Colonic mucosa (tissue), 4 donors: ENCODE measurements at regions of chr4 and their contacts with region 1.

Region 1: DNA sequence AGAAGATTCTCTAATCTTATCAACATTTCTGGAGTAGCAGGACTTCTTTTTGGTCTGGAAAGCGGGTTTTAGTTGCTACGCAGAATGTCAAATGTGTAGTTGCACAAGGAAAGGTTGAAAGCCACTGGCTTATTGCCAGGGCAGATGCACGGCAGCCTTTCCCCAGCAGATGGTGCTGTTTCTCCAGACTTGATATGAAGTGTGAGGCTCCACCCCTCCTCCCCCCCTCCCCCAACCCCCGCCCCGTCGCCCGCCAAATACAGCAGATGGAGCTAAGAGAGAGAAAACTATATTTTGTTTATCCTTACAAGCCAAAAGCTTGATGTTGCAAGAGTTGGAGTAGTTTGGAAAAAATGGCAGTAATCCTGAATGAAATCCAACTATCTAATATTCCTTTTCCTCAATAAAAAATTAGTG is 32.0 kb downstream of the ENOPH1 start:
- DNase-seq: peak; percentile 89
- H3K4me3 ChIP-seq: no peak overlapping the region
- H3K27ac ChIP-seq: no peak overlapping the region
- H3K4me1 ChIP-seq: no peaks in the 10 kb centered on the region
- H3K27me3 ChIP-seq: no peaks in the 10 kb centered on the region
- CTCF ChIP-seq: peak; percentile 89

Region 2: DNA sequence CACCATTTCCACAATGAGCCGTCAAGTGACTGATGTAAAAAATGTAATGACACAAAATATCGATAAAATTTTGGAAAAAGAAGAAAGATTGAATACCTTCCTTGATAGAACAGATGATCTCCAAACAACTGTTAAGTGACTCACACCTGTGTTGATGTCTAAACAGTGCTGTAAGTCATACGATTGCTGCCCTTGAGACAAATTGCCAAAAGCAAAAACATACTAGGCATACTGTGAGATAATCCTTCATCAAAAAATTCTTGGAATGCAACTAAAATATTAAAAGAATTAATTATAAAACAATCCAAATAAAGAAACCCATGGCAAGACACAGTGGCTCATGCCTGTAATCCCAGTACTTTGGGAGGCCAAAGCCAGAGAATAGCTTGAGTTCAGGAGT is 142.1 kb before region 1 on chr4:
- intact Hi-C with region 1: no loop called
- DNase-seq: no peak
- H3K4me3 ChIP-seq: no peak overlapping the region
- H3K27ac ChIP-seq: no peak overlapping the region
- H3K4me1 ChIP-seq: no peaks in the 10 kb centered on the region
- H3K27me3 ChIP-seq: no peaks in the 10 kb centered on the region
- CTCF ChIP-seq: no peak

Region 3: GRCh38 chr4:82688091-82688795 is 225.8 kb after region 1 on chr4:
- intact Hi-C with region 1: no loop called
- DNase-seq: no peak
- H3K4me3 ChIP-seq: no peak overlapping the region
- H3K27ac ChIP-seq: no peak overlapping the region
- H3K4me1 ChIP-seq: no peaks in the 10 kb centered on the region
- H3K27me3 ChIP-seq: no peaks in the 10 kb centered on the region
- CTCF ChIP-seq: no peak

Region 4: DNA sequence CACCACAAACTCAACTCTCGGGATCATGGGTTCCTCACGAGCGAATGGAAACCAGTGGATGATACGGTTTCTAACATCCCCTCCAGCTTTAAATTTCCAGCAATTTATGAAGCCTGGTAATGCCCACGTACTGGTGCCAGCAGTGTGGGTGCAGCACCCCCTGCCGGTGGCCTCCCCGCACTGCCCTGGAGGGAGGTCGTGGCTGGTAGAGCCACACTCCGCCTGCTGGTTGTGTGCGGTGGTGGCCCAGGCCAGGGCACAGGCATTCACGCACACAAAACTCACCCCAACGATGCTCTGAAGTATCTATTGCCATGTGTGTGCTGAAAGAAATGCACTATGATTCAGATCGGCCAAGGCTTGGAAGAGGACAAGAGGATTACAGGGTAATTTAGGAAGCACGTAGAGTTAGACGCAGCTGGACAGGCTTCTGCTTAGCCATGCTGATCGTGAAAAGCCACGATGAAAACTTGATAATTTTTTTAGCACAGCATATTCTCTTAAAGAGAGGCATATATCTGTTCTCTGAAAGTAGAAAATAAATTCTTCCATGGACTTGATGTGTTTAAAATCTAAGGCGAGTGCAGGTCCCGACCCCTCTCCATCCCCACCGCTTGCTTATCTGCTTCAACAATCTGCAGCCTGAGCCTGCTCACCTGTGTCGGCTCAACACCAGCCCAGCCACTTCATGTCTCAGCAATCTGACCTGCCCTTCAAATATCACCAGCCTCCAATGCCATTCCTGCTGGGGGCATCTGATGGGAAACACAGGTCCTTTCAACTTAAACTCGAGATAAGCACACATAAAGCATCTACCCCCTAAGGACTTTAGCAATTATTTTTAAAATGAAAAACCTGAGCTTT is 277.1 kb after region 1 on chr4:
- intact Hi-C with region 1: loop called (anchors 2 kb)
- DNase-seq: peak; percentile 81
- H3K4me3 ChIP-seq: no peak overlapping the region
- H3K27ac ChIP-seq: no peak overlapping the region
- H3K4me1 ChIP-seq: no peaks in the 10 kb centered on the region
- H3K27me3 ChIP-seq: no peaks in the 10 kb centered on the region
- CTCF ChIP-seq: peak; percentile 90